ENCODE measurements at regions of chr18 and their contacts with region 1.

Region 1: DNA sequence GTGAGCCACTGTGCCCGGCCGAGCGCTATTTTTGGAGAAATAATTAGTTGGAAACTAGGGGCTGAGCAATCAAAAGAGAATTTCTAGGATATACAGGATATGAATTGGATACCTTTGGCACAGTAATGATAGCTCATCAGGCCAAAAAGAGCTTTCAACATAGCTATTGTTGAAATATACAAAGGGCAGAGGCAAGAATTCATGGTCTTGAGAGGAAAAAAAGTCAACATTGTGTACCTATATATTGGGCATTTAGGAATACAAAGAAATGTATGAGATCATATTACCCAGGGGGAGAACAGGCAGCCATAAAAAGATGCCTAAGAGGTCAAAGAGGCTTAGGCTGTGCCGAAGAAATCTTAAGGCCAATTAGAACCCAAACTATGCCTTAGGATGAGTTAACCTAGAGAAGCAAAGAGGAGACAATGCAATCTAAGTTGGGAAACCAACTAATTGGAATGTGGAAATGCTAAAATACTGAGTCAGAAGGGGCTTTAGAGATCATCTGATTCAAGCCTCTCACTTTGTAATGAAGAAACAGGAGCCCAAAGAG is 99.0 kb downstream of the RBBP8 start:
- DNase-seq: no peak
- ATAC-seq: no peak
- H3K4me3 ChIP-seq: no peak overlapping the region
- H3K4me3 Mint-ChIP-seq: no peak overlapping the region
- H3K27ac ChIP-seq: no peak overlapping the region
- H3K27ac Mint-ChIP-seq: no peak overlapping the region
- H3K4me1 ChIP-seq: no peaks in the 10 kb centered on the region
- H3K4me1 Mint-ChIP-seq: peaks cover 8% of the 10 kb centered on the region
- H3K27me3 ChIP-seq: no peaks in the 10 kb centered on the region
- H3K27me3 Mint-ChIP-seq: no peaks in the 10 kb centered on the region
- CTCF ChIP-seq: no peak

Region 2: GRCh38 chr18:23071285-23071684 is 39.2 kb after region 1 on chr18:
- CTCF ChIA-PET with region 1: no interaction called
- POLR2A ChIA-PET with region 1: interaction called, 3 read pairs
- intact Hi-C with region 1: loop called in 1 of 2 experiments (anchors 5 kb)
- DNase-seq: peak; percentile 65 to 98 (median 80)
- ATAC-seq: peak; percentile 95
- H3K4me3 ChIP-seq: peak overlapping the region; percentile 27
- H3K4me3 Mint-ChIP-seq: peak overlapping the region; percentile 84
- H3K27ac ChIP-seq: peak overlapping the region; percentile 11 to 23
- H3K27ac Mint-ChIP-seq: peak overlapping the region; percentile 79
- H3K4me1 ChIP-seq: peaks cover 65% of the 10 kb centered on the region
- H3K4me1 Mint-ChIP-seq: peaks cover 82% of the 10 kb centered on the region
- H3K27me3 ChIP-seq: no peaks in the 10 kb centered on the region
- H3K27me3 Mint-ChIP-seq: no peaks in the 10 kb centered on the region
- CTCF ChIP-seq: no peak

Region 3: GRCh38 chr18:23099621-23100020 is 67.5 kb after region 1 on chr18:
- CTCF ChIA-PET with region 1: interaction called, 3 read pairs
- POLR2A ChIA-PET with region 1: no interaction called
- intact Hi-C with region 1: loop called in 1 of 2 experiments (anchors 10 kb)
- DNase-seq: no peak
- ATAC-seq: no peak
- H3K4me3 ChIP-seq: no peak overlapping the region
- H3K4me3 Mint-ChIP-seq: no peak overlapping the region
- H3K27ac ChIP-seq: no peak overlapping the region
- H3K27ac Mint-ChIP-seq: no peak overlapping the region
- H3K4me1 ChIP-seq: no peaks in the 10 kb centered on the region
- H3K4me1 Mint-ChIP-seq: no peaks in the 10 kb centered on the region
- H3K27me3 ChIP-seq: no peaks in the 10 kb centered on the region
- H3K27me3 Mint-ChIP-seq: no peaks in the 10 kb centered on the region
- CTCF ChIP-seq: no peak

Region 4: DNA sequence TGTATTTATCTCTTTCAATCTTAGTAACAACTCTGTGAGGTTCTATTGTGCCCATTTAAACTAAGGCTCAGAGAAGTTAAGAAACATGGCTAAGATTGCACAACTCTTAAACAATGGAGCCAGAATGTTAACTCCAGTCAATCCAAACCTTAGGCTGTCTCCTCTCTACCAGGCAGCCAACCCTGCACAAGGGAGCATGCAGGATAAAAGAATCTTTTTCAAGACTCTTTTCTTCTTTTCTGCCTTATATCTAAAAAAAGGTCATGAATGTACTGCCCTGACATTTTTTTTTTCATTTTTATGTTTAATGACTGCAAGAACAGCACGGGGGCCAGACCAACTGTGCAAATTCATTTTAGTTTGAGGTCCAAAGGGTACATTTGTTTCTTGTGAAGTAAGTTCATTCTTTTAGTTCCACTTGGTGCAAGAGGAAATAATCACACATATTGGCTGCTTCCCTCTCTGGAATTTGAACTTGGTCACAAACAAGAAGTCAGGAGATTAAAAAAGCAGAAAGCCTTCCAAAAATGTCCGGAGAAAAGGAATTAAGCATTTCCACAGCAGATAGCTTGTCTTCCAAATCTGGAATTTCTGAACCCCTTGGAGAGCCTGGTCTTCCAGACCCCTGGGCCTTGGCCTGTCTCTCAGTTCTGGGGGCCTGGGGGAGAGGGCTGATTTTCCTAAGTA is 325.0 kb after region 1 on chr18:
- CTCF ChIA-PET with region 1: interaction called, 4 read pairs
- POLR2A ChIA-PET with region 1: no interaction called
- intact Hi-C with region 1: loop called (anchors 2 kb)
- DNase-seq: no peak
- ATAC-seq: no peak
- H3K4me3 ChIP-seq: no peak overlapping the region
- H3K4me3 Mint-ChIP-seq: no peak overlapping the region
- H3K27ac ChIP-seq: no peak overlapping the region
- H3K27ac Mint-ChIP-seq: no peak overlapping the region
- H3K4me1 ChIP-seq: peaks cover 12% of the 10 kb centered on the region
- H3K4me1 Mint-ChIP-seq: peaks cover 16% of the 10 kb centered on the region
- H3K27me3 ChIP-seq: no peaks in the 10 kb centered on the region
- H3K27me3 Mint-ChIP-seq: no peaks in the 10 kb centered on the region
- CTCF ChIP-seq: no peak

Region 5: DNA sequence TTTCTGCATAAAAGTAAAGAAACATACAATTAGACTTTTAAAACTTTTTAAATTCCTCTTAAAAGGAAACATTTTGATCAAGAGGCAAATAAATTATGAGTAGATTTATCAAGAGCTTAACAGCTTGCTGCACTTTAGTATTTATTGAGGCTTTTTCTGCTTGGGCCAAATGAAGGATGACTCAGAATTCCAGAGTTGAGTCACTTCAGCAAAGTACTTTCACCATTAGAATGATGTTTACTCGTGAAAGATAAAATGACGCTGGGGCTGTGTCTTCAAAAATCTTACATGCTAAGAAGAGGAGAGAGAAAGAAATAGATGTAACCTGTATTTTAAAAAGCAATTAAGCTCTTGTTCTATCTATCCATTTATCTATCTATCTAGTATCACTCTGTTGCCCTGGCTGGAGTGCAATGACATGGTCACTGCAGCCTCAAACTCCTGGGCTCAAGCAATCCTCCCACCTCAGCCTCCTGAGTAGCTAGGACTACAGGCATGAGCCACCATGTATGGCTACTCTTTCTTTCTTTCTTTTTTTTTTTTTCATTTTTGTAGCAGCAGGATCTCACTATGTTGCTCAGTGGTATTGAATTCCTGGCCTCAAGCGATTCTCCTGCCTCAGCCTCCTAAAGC is 345.7 kb after region 1 on chr18:
- CTCF ChIA-PET with region 1: interaction called, 7 read pairs
- POLR2A ChIA-PET with region 1: no interaction called
- intact Hi-C with region 1: loop called in 1 of 2 experiments (anchors 2 kb)
- DNase-seq: no peak
- ATAC-seq: no peak
- H3K4me3 ChIP-seq: no peak overlapping the region
- H3K4me3 Mint-ChIP-seq: no peak overlapping the region
- H3K27ac ChIP-seq: no peak overlapping the region
- H3K27ac Mint-ChIP-seq: no peak overlapping the region
- H3K4me1 ChIP-seq: no peaks in the 10 kb centered on the region
- H3K4me1 Mint-ChIP-seq: no peaks in the 10 kb centered on the region
- H3K27me3 ChIP-seq: no peaks in the 10 kb centered on the region
- H3K27me3 Mint-ChIP-seq: no peaks in the 10 kb centered on the region
- CTCF ChIP-seq: no peak

Region 6: DNA sequence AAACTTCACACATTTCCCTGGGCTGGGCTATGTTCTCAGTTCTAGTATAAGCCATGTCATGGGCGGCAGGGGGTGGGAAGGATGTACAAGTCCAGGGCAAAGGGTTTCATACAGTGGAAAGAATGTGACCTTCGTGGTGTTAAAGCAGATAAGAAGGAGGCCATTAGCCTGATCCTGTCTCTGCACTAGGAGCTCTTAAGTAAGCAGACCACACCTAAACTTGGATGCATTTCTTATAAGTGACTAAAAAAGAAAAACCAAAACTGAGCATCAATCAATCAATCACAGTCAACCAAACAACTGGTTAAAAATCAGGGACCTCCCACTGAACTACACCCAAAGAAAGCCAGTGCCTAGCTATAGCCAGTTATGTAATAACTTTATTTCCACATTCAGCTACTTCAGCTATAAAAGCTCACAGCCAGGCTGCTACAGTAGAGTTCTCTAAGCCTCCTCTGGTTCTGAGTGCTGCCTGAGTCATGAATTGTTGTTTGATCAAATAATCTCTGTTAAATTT is 374.2 kb after region 1 on chr18:
- CTCF ChIA-PET with region 1: interaction called, 20 read pairs
- POLR2A ChIA-PET with region 1: no interaction called
- intact Hi-C with region 1: loop called in 1 of 2 experiments (anchors 1 kb)
- DNase-seq: no peak
- ATAC-seq: no peak
- H3K4me3 ChIP-seq: no peak overlapping the region
- H3K4me3 Mint-ChIP-seq: no peak overlapping the region
- H3K27ac ChIP-seq: no peak overlapping the region
- H3K27ac Mint-ChIP-seq: no peak overlapping the region
- H3K4me1 ChIP-seq: no peaks in the 10 kb centered on the region
- H3K4me1 Mint-ChIP-seq: no peaks in the 10 kb centered on the region
- H3K27me3 ChIP-seq: no peaks in the 10 kb centered on the region
- H3K27me3 Mint-ChIP-seq: no peaks in the 10 kb centered on the region
- CTCF ChIP-seq: no peak

Region 7: GRCh38 chr18:23412351-23412964 is 380.4 kb after region 1 on chr18:
- CTCF ChIA-PET with region 1: interaction called, 20 read pairs
- POLR2A ChIA-PET with region 1: no interaction called
- intact Hi-C with region 1: loop called (anchors 1 to 2 kb)
- DNase-seq: no peak
- ATAC-seq: no peak
- H3K4me3 ChIP-seq: no peak overlapping the region
- H3K4me3 Mint-ChIP-seq: no peak overlapping the region
- H3K27ac ChIP-seq: no peak overlapping the region
- H3K27ac Mint-ChIP-seq: no peak overlapping the region
- H3K4me1 ChIP-seq: no peaks in the 10 kb centered on the region
- H3K4me1 Mint-ChIP-seq: no peaks in the 10 kb centered on the region
- H3K27me3 ChIP-seq: no peaks in the 10 kb centered on the region
- H3K27me3 Mint-ChIP-seq: no peaks in the 10 kb centered on the region
- CTCF ChIP-seq: no peak

Region 8: GRCh38 chr18:23743733-23744333 is 711.7 kb after region 1 on chr18:
- CTCF ChIA-PET with region 1: no interaction called
- POLR2A ChIA-PET with region 1: no interaction called
- intact Hi-C with region 1: no loop called
- DNase-seq: no peak
- ATAC-seq: no peak
- H3K4me3 ChIP-seq: no peak overlapping the region
- H3K4me3 Mint-ChIP-seq: no peak overlapping the region
- H3K27ac ChIP-seq: no peak overlapping the region
- H3K27ac Mint-ChIP-seq: no peak overlapping the region
- H3K4me1 ChIP-seq: peaks cover 3% of the 10 kb centered on the region
- H3K4me1 Mint-ChIP-seq: peaks cover 17% of the 10 kb centered on the region
- H3K27me3 ChIP-seq: peaks cover 0 to 4% of the 10 kb centered on the region in 2 experiments
- H3K27me3 Mint-ChIP-seq: peaks cover 13% of the 10 kb centered on the region
- CTCF ChIP-seq: no peak